OCI-LY7 (cell line): ENCODE measurements at regions of chr10 and their contacts with region 1.

Region 1: DNA sequence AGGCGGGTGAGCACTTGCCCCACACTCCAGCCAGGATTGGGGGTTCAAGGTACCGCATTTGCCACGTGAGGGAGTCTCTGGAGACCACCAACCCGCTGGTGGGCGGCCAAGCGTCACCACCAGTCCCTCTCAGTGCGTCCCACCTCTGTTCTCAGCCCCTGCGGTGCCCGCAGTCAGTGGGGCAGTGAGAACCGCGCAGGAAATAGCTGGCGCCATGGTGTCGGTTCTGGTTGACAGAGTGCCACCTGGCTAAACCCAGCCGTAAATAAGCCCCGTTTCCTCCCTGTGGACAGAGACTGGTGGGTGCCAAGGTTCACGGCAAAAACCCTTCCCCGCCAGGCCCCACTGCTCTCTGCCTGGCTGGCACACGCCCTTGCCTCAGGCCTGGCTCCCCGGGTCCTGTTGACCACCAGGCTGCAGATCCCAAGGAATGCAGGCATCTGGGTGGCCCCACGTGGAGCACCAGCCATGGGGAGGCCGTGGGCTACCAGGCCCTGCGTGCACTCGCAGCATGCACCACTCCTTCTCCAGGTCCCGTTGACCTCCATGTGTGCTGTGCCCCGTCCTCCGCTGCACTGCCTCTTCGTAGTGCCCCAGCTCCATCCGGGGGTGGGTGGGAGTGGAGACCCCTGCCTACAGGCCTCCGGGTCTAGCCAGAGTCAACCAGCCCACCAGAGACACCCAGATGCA is 140.0 kb downstream of the LHPP start:
- DNase-seq: peak; percentile 92
- H3K4me3 ChIP-seq: peak overlapping the region; percentile 15
- H3K27ac ChIP-seq: peak overlapping the region; percentile 79
- H3K4me1 ChIP-seq: peaks cover 89% of the 10 kb centered on the region
- CTCF ChIP-seq: no peak

Region 2: GRCh38 chr10:124539935-124540641 is 61.5 kb before region 1 on chr10:
- CTCF ChIA-PET with region 1: interaction called, 4 read pairs
- POLR2A ChIA-PET with region 1: interaction called, 34 read pairs
- intact Hi-C with region 1: loop called (anchors 1 kb)
- DNase-seq: peak; percentile 96
- H3K4me3 ChIP-seq: peak overlapping the region; percentile 36
- H3K27ac ChIP-seq: peak overlapping the region; percentile 98
- H3K4me1 ChIP-seq: peaks cover 100% of the 10 kb centered on the region
- CTCF ChIP-seq: peak; percentile 71

Region 3: GRCh38 chr10:124545351-124546054 is 56.1 kb before region 1 on chr10:
- CTCF ChIA-PET with region 1: interaction called, 3 read pairs
- POLR2A ChIA-PET with region 1: interaction called, 34 read pairs
- intact Hi-C with region 1: loop called (anchors 1 kb)
- DNase-seq: peak; percentile 74
- H3K4me3 ChIP-seq: peak overlapping the region; percentile 62
- H3K27ac ChIP-seq: peak overlapping the region; percentile 98
- H3K4me1 ChIP-seq: peaks cover 100% of the 10 kb centered on the region
- CTCF ChIP-seq: no peak

Region 4: GRCh38 chr10:124572751-124573150 is 28.8 kb before region 1 on chr10:
- CTCF ChIA-PET with region 1: no interaction called
- POLR2A ChIA-PET with region 1: no interaction called
- intact Hi-C with region 1: no loop called
- DNase-seq: no peak
- H3K4me3 ChIP-seq: no peak overlapping the region
- H3K27ac ChIP-seq: no peak overlapping the region
- H3K4me1 ChIP-seq: peaks cover 17% of the 10 kb centered on the region
- CTCF ChIP-seq: no peak

Region 5: GRCh38 chr10:125911975-125912374 is 1310.4 kb after region 1 on chr10:
- CTCF ChIA-PET with region 1: no interaction called
- POLR2A ChIA-PET with region 1: no interaction called
- intact Hi-C with region 1: no loop called
- DNase-seq: no peak
- H3K4me3 ChIP-seq: no peak overlapping the region
- H3K27ac ChIP-seq: no peak overlapping the region
- H3K4me1 ChIP-seq: no peaks in the 10 kb centered on the region
- CTCF ChIP-seq: no peak